PC-3 (cell line): ENCODE measurements at regions of chr17 and their contacts with region 1.

Region 1: GRCh38 chr17:81566461-81567126 is 14.4 kb upstream of the FAAP100 start:
- DNase-seq: peak; percentile 87
- ATAC-seq: peak; percentile 89
- H3K4me3 ChIP-seq: peak overlapping the region; percentile 29; the same call in 1 of the 2 replicates
- H3K27ac ChIP-seq: peak overlapping the region; percentile 63
- H3K4me1 ChIP-seq: peaks cover 35% of the 10 kb centered on the region
- H3K27me3 ChIP-seq: no peaks in the 10 kb centered on the region
- CTCF ChIP-seq: no peak

Region 2: DNA sequence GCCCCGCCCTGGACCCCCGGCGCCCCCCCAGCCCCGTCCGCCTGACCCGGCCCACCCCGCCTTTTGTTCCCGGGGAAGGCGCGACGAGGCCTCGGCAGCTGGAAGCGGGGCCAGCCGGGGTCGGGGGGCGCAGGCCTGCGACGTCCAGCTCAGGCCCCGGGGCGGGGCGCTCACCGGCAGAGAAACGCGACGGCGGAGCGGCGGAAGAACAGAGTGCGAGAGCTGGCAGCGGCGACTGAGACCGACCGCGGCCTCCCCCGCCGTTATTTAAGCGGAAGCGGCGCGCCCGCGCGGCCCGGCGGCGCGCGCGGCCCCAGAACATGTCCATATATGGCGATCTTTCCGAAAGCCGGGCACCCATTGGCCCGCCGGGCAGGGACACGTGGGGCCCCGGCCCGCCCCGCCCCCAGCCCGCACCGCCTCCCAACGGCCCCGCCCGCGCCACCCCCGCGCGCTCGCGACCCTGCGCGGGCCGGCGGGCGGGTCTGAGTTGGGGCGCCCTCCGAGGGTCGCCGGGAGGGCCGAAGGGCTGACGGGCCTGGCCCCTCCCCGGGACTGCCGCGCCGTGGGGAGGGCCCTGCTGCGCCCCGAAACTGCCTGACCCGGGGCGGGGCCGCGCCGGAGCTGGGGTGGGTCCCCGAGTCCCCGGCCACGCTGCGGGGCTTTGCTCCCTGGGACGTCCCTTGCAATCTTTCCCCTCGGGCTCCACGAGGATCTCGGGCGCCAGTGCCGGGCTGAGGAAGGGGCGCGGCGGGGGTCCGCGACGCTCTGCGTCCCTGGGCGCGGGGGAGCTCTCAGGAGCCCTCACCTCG is 53.8 kb before region 1 on chr17 and contains the start of gene ACTG1:
- CTCF ChIA-PET with region 1: interaction called, 15 read pairs
- POLR2A ChIA-PET with region 1: interaction called, 4 read pairs
- intact Hi-C with region 1: no loop called
- DNase-seq: peak; percentile 95
- ATAC-seq: peak; percentile 25
- H3K4me3 ChIP-seq: peak within 1 kb of the TSS; percentile 99
- H3K27ac ChIP-seq: peak within 1 kb of the TSS; percentile 88
- H3K4me1 ChIP-seq: peaks cover 38% of the 10 kb centered on the region
- H3K27me3 ChIP-seq: no peaks in the 10 kb centered on the region
- CTCF ChIP-seq: no peak
- total RNA-seq, gene ACTG1: 4,503 and 4,798 TPM in 2 replicates

Region 3: DNA sequence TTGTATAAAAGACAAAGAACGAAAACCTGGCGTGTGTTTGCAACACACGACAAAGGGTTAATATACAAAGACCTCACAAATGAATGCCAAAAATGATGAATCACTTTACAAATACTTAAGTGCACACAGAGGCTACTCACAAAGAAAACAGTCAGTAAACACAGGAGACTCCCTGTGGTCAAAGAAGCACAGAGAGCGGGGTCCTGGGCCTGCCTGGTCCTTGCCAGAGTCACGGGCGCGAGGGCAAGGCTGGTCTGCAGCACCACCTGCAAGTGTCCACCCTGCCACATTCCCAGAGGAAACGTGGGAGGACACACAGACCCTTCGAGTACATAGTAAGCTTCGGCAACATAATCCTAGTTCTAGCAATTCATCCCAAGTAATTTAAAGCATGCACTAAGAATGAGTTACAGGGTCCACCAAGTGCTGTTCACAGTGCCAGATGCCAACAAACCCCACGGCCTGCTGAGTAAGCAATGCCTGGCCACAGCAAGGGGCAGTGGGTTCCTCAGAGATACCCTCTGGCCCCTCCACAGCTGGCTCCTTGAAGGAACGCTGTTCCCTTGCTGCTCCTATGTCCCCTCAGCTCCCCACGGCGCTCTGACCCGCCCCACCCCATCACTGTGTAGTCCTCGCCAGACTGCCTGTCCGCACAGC is 10.2 kb after region 1 on chr17:
- CTCF ChIA-PET with region 1: no interaction called
- POLR2A ChIA-PET with region 1: interaction called, 3 read pairs
- intact Hi-C with region 1: loop called (anchors 1 kb)
- DNase-seq: peak; percentile 95
- ATAC-seq: peak; percentile 97
- H3K4me3 ChIP-seq: peak overlapping the region; percentile 23; the same call in 1 of the 2 replicates
- H3K27ac ChIP-seq: peak overlapping the region; percentile 73
- H3K4me1 ChIP-seq: peaks cover 32% of the 10 kb centered on the region
- H3K27me3 ChIP-seq: no peaks in the 10 kb centered on the region
- CTCF ChIP-seq: 0 out of 2 replicates have a peak, but pooled peaks have one; percentile 10